CD4-positive, alpha-beta memory T cell (primary cell): ENCODE measurements at regions of chr17 and their contacts with region 1.

Region 1: DNA sequence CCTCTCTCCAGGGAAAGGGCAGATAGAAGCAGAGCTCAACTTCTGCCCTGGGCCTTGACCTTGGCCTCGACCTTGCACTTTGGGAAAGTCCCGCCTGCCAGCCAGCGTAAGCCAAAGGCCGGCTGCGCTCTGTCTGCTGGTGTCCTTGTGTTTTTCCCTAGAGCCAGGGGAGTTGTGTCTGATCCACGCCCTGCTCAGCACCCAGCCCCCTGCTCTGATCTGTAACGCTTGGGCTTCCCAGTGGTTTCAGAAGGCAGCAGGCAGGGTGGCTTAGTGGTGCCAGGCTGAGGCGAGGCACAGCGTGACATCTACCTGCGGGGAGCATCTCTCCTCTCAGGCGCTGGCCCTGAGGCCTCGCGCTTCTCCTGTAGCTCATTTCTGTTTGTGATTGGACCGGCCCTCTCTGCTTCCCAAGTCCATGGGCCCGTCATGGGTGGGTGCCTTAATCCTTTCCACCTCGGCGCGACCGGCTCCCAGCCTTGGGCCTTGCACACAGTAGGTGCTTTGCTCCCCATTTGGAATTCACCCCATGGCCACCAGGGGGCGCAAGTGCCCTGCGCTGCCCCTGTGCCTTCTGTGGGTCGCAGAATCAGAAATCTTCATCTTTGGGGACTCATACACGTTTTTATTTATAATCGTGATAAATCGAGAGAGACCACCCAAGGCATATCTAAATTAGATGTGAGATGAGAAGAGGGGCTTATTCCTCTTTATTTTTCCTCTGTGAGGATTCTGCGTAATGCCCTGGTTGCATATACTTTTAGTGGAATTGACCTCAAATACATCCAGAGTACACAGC is 24.2 kb downstream of the SGSH start:
- DNase-seq: peak; percentile 44 to 62 (median 57)
- H3K4me3 ChIP-seq: no peak overlapping the region
- H3K4me3 Mint-ChIP-seq: no peak overlapping the region
- H3K27ac ChIP-seq: no peak overlapping the region
- H3K27ac Mint-ChIP-seq: peak overlapping the region in 4 of 7 donors; percentile 10 to 87 (median 58)
- H3K4me1 ChIP-seq: no peaks in the 10 kb centered on the region
- H3K4me1 Mint-ChIP-seq: peaks cover 0 to 4% (median 4%) of the 10 kb centered on the region in 4 donors
- H3K27me3 ChIP-seq: no peaks in the 10 kb centered on the region
- H3K27me3 Mint-ChIP-seq: peaks cover 0 to 1% of the 10 kb centered on the region in 2 donors

Region 2: GRCh38 chr17:79970576-79971068 is 225.3 kb before region 1 on chr17:
- CTCF ChIA-PET with region 1: no interaction called
- POLR2A ChIA-PET with region 1: no interaction called
- intact Hi-C with region 1: no loop called
- DNase-seq: peak in 4 of 5 donors; percentile 18 to 42 (median 30)
- H3K4me3 ChIP-seq: no peak overlapping the region
- H3K4me3 Mint-ChIP-seq: no peak overlapping the region
- H3K27ac ChIP-seq: no peak overlapping the region
- H3K27ac Mint-ChIP-seq: no peak overlapping the region
- H3K4me1 ChIP-seq: no peaks in the 10 kb centered on the region
- H3K4me1 Mint-ChIP-seq: no peaks in the 10 kb centered on the region
- H3K27me3 ChIP-seq: no peaks in the 10 kb centered on the region
- H3K27me3 Mint-ChIP-seq: peaks cover 1 to 6% of the 10 kb centered on the region in 2 donors

Region 3: DNA sequence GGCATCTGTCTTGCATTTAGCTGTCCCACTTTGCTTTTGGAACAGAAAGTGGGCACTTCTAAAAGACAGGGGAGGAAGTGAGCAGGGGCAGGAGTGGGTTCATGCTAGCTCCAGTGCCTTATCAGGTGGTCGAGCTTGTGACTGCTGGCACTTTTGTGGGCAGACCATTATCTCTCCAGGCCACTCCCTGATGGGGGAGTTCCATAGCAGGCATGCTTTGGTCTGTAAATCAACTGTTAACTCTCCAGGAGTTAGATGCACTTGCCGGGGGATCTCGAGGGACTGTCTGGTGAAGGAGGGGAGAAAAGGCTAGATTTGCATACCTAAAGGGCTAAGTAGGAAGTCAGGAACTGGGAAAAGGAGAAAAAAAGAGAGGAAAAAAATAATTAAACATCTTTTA is 35.4 kb before region 1 on chr17:
- CTCF ChIA-PET with region 1: no interaction called
- POLR2A ChIA-PET with region 1: no interaction called
- intact Hi-C with region 1: no loop called
- DNase-seq: no peak
- H3K4me3 ChIP-seq: no peak overlapping the region
- H3K4me3 Mint-ChIP-seq: no peak overlapping the region
- H3K27ac ChIP-seq: no peak overlapping the region
- H3K27ac Mint-ChIP-seq: peak overlapping the region in 1 of 7 donors; percentile 70
- H3K4me1 ChIP-seq: no peaks in the 10 kb centered on the region
- H3K4me1 Mint-ChIP-seq: peaks cover 0 to 4% (median 0%) of the 10 kb centered on the region in 4 donors
- H3K27me3 ChIP-seq: no peaks in the 10 kb centered on the region
- H3K27me3 Mint-ChIP-seq: peaks cover 5 to 18% of the 10 kb centered on the region in 2 donors

Region 4: GRCh38 chr17:80181431-80181830 is 14.5 kb before region 1 on chr17:
- CTCF ChIA-PET with region 1: no interaction called
- POLR2A ChIA-PET with region 1: no interaction called
- intact Hi-C with region 1: no loop called
- DNase-seq: no peak
- H3K4me3 ChIP-seq: no peak overlapping the region
- H3K4me3 Mint-ChIP-seq: no peak overlapping the region
- H3K27ac ChIP-seq: no peak overlapping the region
- H3K27ac Mint-ChIP-seq: no peak overlapping the region
- H3K4me1 ChIP-seq: no peaks in the 10 kb centered on the region
- H3K4me1 Mint-ChIP-seq: no peaks in the 10 kb centered on the region
- H3K27me3 ChIP-seq: peaks cover 6% of the 10 kb centered on the region
- H3K27me3 Mint-ChIP-seq: peaks cover 0 to 4% of the 10 kb centered on the region in 2 donors

Region 5: GRCh38 chr17:80254396-80255251 is 58.7 kb after region 1 on chr17:
- CTCF ChIA-PET with region 1: interaction called, 90 read pairs
- POLR2A ChIA-PET with region 1: interaction called, 6 read pairs
- intact Hi-C with region 1: loop called (anchors 1 kb)
- DNase-seq: peak; percentile 52 to 79 (median 58)
- H3K4me3 ChIP-seq: no peak overlapping the region
- H3K4me3 Mint-ChIP-seq: peak overlapping the region; percentile 6 to 79 (median 51)
- H3K27ac ChIP-seq: peak overlapping the region; percentile 29
- H3K27ac Mint-ChIP-seq: peak overlapping the region; percentile 86 to 94 (median 90)
- H3K4me1 ChIP-seq: peaks cover 43% of the 10 kb centered on the region
- H3K4me1 Mint-ChIP-seq: peaks cover 27 to 58% (median 41%) of the 10 kb centered on the region in 4 donors
- H3K27me3 ChIP-seq: no peaks in the 10 kb centered on the region
- H3K27me3 Mint-ChIP-seq: no peaks in the 10 kb centered on the region

Region 6: GRCh38 chr17:80364216-80364618 is 168.3 kb after region 1 on chr17:
- CTCF ChIA-PET with region 1: interaction called, 6 read pairs
- POLR2A ChIA-PET with region 1: no interaction called
- intact Hi-C with region 1: loop called (anchors 1 kb)
- DNase-seq: no peak
- H3K4me3 ChIP-seq: no peak overlapping the region
- H3K4me3 Mint-ChIP-seq: no peak overlapping the region
- H3K27ac ChIP-seq: no peak overlapping the region
- H3K27ac Mint-ChIP-seq: no peak overlapping the region
- H3K4me1 ChIP-seq: no peaks in the 10 kb centered on the region
- H3K4me1 Mint-ChIP-seq: no peaks in the 10 kb centered on the region
- H3K27me3 ChIP-seq: no peaks in the 10 kb centered on the region
- H3K27me3 Mint-ChIP-seq: no peaks in the 10 kb centered on the region